HCT116 (cell line): ENCODE measurements at regions of chr11 and their contacts with region 1.

Region 1: DNA sequence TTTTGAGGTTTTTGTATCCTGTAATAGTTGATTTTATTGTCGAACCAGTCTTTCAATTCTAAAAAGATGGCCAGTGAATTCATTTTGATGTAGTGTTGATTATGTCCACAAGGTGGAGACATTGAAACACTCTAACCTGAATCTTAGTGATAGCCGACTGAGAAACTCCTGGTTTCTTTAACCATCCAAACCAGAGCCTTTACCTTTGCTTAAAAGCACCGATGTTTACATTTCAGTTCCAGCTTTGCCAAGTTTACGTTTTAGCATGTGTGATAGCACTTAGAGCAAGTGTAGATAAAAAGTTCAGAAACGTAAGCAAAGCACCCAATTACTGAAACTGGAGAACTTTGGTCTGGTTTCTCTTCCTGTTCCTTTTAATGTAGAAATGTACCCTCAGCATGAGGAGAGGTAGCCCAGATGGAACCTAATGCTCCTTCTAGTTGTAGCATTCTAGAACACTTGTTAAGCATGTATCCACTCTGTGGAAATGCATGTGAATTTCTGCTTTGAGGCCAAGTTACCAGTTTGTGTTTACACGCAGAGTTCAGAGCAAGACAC is 208.6 kb downstream of the DBX1 start:
- DNase-seq: peak; percentile 32
- ATAC-seq: peak; percentile 78
- H3K4me3 ChIP-seq: no peak overlapping the region
- H3K27ac ChIP-seq: no peak overlapping the region
- H3K4me1 ChIP-seq: peaks cover 0 to 2% of the 10 kb centered on the region in 2 experiments; a peak in 1 of 4 replicates
- H3K27me3 ChIP-seq: peaks cover 4% of the 10 kb centered on the region
- CTCF ChIP-seq: peak; percentile 47 to 69 (median 60); a peak in 4 of 6 replicates
- POLR2A ChIP-seq: no peak
- RAD21 ChIP-seq: peak; percentile 75

Region 2: GRCh38 chr11:20110908-20111669 is 159.5 kb after region 1 on chr11:
- CTCF ChIA-PET with region 1: interaction called, 17 read pairs
- POLR2A ChIA-PET with region 1: no interaction called
- RAD21 ChIA-PET with region 1: interaction called in 1 of 2 experiments, 4 read pairs
- intact Hi-C with region 1: loop called (anchors 1 kb)
- DNase-seq: peak; percentile 72
- ATAC-seq: peak; percentile 75
- H3K4me3 ChIP-seq: no peak overlapping the region
- H3K27ac ChIP-seq: no peak overlapping the region
- H3K4me1 ChIP-seq: peaks cover 14 to 27% of the 10 kb centered on the region in 2 experiments
- H3K27me3 ChIP-seq: no peaks in the 10 kb centered on the region
- CTCF ChIP-seq: peak; percentile 69 to 97 (median 87)
- POLR2A ChIP-seq: no peak
- RAD21 ChIP-seq: peak; percentile 81

Region 3: GRCh38 chr11:20337526-20338154 is 386.0 kb after region 1 on chr11:
- CTCF ChIA-PET with region 1: no interaction called
- POLR2A ChIA-PET with region 1: no interaction called
- RAD21 ChIA-PET with region 1: no interaction called
- intact Hi-C with region 1: loop called (anchors 2 kb)
- DNase-seq: peak; percentile 27
- ATAC-seq: peak; percentile 90
- H3K4me3 ChIP-seq: no peak overlapping the region
- H3K27ac ChIP-seq: no peak overlapping the region
- H3K4me1 ChIP-seq: no peaks in the 10 kb centered on the region
- H3K27me3 ChIP-seq: peaks cover 85% of the 10 kb centered on the region
- CTCF ChIP-seq: peak; percentile 47 to 63 (median 51); a peak in 5 of 6 replicates
- POLR2A ChIP-seq: no peak
- RAD21 ChIP-seq: peak; percentile 56

Region 4: GRCh38 chr11:20355221-20356219 is 403.9 kb after region 1 on chr11:
- CTCF ChIA-PET with region 1: no interaction called
- POLR2A ChIA-PET with region 1: no interaction called
- RAD21 ChIA-PET with region 1: no interaction called
- intact Hi-C with region 1: loop called (anchors 5 kb)
- DNase-seq: peak; percentile 54
- ATAC-seq: peak; percentile 89
- H3K4me3 ChIP-seq: no peak overlapping the region
- H3K27ac ChIP-seq: no peak overlapping the region
- H3K4me1 ChIP-seq: peaks cover 0 to 12% of the 10 kb centered on the region in 2 experiments; a peak in 2 of 4 replicates
- H3K27me3 ChIP-seq: no peaks in the 10 kb centered on the region
- CTCF ChIP-seq: peak; percentile 28 to 70 (median 64); a peak in 5 of 6 replicates
- POLR2A ChIP-seq: no peak
- RAD21 ChIP-seq: peak; percentile 35; the same call in 1 of the 2 replicates